ENCODE measurements at regions of chr10 and their contacts with region 1.

Region 1: GRCh38 chr10:116385994-116386809 is 41.4 kb upstream of the PNLIPRP3 start:
- DNase-seq: peak; percentile 39
- H3K4me3 ChIP-seq: no peak overlapping the region
- H3K27ac ChIP-seq: no peak overlapping the region
- H3K4me1 ChIP-seq: no peaks in the 10 kb centered on the region
- H3K27me3 ChIP-seq: no peaks in the 10 kb centered on the region
- CTCF ChIP-seq: peak in 1 of 2 donors; percentile 33
- POLR2A ChIP-seq: no peak

Region 2: GRCh38 chr10:115141254-115141653 is 1244.9 kb before region 1 on chr10:
- CTCF ChIA-PET with region 1: interaction called, 10 read pairs
- POLR2A ChIA-PET with region 1: no interaction called
- dilution Hi-C with region 1: no loop called
- intact Hi-C with region 1: loop called (anchors 1 kb)
- DNase-seq: peak; percentile 13
- H3K4me3 ChIP-seq: no peak overlapping the region
- H3K27ac ChIP-seq: no peak overlapping the region
- H3K4me1 ChIP-seq: no peaks in the 10 kb centered on the region
- H3K27me3 ChIP-seq: no peaks in the 10 kb centered on the region
- CTCF ChIP-seq: peak in 1 of 2 donors; percentile 18
- POLR2A ChIP-seq: no peak

Region 3: DNA sequence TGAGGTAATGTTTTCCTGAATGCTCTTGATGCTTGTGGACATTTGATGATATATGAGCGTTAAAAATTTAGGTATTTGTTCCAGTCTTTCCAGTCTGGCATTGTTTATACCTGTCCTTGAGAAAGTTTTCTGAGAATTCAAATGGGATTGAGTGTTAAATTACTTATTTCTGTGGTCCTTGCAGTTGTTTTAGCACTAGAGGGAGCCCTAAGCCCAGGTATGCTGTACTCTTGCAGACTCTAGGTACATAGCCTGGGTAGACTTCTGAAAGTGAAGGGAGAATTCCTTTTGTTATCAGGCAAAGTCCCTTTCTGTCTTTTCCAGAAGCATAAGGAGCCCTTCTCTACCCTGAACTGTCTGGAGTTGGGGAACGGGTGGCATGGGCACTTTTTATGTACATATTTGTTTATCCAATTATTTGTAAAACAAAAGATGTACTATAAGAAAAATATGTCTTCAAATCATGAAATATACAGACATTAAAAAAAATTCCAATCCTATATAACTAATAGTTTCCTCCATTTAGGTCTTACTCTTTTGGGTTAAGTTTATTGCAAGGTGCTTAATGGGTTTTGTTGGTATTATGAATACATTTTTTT is 1030.9 kb before region 1 on chr10:
- CTCF ChIA-PET with region 1: interaction called, 5 read pairs
- POLR2A ChIA-PET with region 1: no interaction called
- dilution Hi-C with region 1: no loop called
- intact Hi-C with region 1: loop called (anchors 1 kb)
- DNase-seq: peak; percentile 49
- H3K4me3 ChIP-seq: no peak overlapping the region
- H3K27ac ChIP-seq: no peak overlapping the region
- H3K4me1 ChIP-seq: no peaks in the 10 kb centered on the region
- H3K27me3 ChIP-seq: no peaks in the 10 kb centered on the region
- CTCF ChIP-seq: peak; percentile 43 to 63
- POLR2A ChIP-seq: no peak

Region 4: DNA sequence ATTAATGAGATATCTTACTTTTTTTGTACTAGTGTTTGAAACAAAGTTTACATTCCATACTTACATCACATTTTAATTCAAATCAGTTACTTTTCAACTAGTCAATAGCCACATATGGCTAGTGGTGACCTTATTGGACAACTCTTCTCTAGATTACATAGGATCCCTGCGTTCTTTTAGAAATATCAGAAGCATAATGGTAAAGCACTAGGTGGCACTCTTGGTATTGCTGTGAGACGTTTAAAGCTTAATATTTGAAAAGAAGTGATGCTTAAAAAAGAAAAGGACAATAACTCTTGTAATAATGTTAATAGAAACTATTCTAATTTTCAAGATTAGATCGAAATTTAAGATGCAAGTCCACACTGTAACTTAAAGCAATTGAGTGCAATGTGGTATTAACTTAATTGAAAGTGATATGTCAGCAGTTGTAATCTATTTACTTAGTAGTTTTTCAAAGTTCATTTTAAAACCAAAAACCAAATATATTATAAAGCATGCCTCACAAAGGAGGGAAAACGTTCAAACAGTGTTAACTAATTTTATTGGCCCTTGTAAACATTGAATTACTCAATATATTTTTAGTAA is 953.9 kb before region 1 on chr10:
- CTCF ChIA-PET with region 1: interaction called, 9 read pairs
- POLR2A ChIA-PET with region 1: no interaction called
- dilution Hi-C with region 1: no loop called
- intact Hi-C with region 1: loop called (anchors 1 kb)
- DNase-seq: peak; percentile 3
- H3K4me3 ChIP-seq: no peak overlapping the region
- H3K27ac ChIP-seq: no peak overlapping the region
- H3K4me1 ChIP-seq: no peaks in the 10 kb centered on the region
- H3K27me3 ChIP-seq: no peaks in the 10 kb centered on the region
- CTCF ChIP-seq: no peak
- POLR2A ChIP-seq: no peak

Region 5: DNA sequence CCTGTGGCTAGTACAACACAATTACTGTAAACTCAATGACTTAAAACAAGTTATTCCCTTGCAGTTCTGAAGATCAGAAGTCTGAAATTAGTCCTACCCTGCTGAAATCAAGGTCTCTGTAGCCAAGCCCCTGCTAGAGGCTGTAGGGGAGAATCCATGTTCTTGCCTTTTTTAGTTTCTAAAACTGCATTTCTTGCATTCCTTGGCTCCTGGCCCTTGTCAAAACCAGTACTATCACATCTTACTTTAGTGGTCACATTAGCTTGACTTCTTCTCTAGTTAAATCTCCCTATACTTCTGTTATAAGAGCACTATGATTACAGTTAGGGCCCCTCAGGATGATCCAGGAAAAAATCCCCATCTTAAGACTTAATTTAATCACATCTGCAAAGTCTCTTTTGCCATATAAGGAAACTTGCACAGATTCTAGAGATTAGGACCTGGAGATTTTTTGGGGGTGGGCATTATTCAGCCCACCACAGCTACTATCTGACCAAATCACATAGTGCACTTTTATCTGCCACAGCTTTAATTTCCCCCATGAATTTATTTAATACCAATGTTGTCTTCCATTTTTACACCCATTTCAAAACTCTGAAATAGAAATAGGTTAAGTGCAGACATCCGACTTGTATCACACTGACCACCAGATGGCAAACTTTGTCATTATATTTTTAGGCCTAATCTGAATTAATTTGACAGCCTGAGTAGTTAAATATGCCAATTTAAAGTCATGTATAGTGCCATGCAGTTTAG is 680.0 kb before region 1 on chr10:
- CTCF ChIA-PET with region 1: interaction called, 10 read pairs
- POLR2A ChIA-PET with region 1: no interaction called
- dilution Hi-C with region 1: no loop called
- intact Hi-C with region 1: loop called (anchors 1 kb)
- DNase-seq: peak; percentile 26
- H3K4me3 ChIP-seq: no peak overlapping the region
- H3K27ac ChIP-seq: no peak overlapping the region
- H3K4me1 ChIP-seq: no peaks in the 10 kb centered on the region
- H3K27me3 ChIP-seq: no peaks in the 10 kb centered on the region
- CTCF ChIP-seq: peak; percentile 12 to 20
- POLR2A ChIP-seq: no peak

Region 6: GRCh38 chr10:116511365-116511764 is 125.2 kb after region 1 on chr10:
- CTCF ChIA-PET with region 1: no interaction called
- POLR2A ChIA-PET with region 1: no interaction called
- dilution Hi-C with region 1: no loop called
- intact Hi-C with region 1: no loop called
- DNase-seq: no peak
- H3K4me3 ChIP-seq: no peak overlapping the region
- H3K27ac ChIP-seq: no peak overlapping the region
- H3K4me1 ChIP-seq: no peaks in the 10 kb centered on the region
- H3K27me3 ChIP-seq: no peaks in the 10 kb centered on the region
- CTCF ChIP-seq: no peak
- POLR2A ChIP-seq: no peak

Measured in endothelial cell of umbilical vein (primary cell).